Posterior vena cava (tissue), 2 donors: ENCODE measurements at regions of chr17 and their contacts with region 1.

Region 1: GRCh38 chr17:1573916-1574696 is 11.5 kb upstream of the PITPNA start:
- DNase-seq: peak; percentile 96

Region 2: DNA sequence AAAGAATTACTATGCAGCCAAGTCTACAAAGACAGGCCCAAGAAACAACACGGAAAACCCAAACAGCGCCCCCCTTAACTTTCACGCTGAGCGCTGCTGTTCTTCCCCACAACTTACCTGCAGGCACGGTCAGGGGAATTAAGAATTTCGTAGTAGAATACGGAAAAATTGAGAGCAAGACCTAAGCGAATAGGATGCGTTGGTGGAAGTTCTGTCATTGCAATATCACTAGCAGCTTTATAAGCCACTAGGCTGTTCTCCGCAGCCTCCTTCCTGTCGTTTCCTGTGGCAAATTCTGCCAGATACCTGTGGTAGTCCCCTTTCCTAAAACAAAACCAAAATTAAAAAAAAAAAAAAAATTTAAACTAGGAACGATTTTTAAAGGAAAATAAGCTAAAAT is 213.1 kb before region 1 on chr17:
- intact Hi-C with region 1: no loop called
- DNase-seq: no peak

Region 3: DNA sequence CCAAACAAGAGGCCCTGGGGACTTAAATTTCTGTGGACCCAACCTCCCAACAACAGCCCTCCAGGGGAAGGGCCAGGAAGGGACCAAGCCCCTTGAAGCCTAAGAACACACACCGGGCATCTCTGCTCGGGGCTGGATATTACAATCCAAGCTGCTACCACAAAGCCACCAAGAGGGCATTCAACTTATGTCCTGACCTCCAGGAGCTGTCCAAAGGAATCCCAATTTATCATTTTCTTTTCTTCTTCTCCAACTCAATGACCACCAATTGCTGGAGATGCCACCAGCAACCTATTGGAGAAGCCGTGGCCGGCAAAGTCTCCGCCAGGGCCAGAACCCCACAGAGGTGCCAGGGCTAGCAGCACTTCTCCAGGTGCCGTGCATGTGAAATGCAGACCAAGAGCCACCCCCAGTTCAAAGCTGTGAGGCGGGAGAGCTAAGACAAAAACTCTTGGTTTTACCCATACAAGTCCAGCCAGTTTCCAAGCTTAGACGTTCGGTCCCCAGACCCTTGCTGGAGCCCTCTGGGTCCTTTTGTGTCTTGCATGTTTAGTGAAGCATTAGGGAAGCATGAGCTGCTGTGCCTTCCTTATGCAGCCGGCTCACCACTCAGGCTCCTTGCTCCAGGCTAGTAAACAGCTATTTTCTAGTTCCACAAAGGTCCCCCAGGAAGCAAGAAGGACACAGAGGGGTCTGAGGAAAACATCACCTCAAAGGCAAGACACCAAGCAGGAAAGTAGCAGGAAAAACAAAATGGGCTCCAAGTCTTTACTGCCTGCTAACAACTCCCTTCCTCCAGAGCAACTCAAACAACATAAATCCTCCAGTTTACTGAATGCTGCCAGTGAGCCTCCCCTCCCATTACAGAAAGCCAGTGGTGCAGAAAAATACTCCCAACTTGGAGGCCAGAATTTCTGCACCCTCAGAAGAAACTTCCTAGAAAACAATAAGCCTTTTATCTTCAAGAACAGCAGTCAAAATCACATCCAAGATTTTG is 14.8 kb before region 1 on chr17:
- intact Hi-C with region 1: loop called in 1 of 2 experiments (anchors 1 kb)
- DNase-seq: no peak

Region 4: GRCh38 chr17:1590031-1590748 is 16.1 kb after region 1 on chr17:
- intact Hi-C with region 1: no loop called
- DNase-seq: peak; percentile 93

Region 5: DNA sequence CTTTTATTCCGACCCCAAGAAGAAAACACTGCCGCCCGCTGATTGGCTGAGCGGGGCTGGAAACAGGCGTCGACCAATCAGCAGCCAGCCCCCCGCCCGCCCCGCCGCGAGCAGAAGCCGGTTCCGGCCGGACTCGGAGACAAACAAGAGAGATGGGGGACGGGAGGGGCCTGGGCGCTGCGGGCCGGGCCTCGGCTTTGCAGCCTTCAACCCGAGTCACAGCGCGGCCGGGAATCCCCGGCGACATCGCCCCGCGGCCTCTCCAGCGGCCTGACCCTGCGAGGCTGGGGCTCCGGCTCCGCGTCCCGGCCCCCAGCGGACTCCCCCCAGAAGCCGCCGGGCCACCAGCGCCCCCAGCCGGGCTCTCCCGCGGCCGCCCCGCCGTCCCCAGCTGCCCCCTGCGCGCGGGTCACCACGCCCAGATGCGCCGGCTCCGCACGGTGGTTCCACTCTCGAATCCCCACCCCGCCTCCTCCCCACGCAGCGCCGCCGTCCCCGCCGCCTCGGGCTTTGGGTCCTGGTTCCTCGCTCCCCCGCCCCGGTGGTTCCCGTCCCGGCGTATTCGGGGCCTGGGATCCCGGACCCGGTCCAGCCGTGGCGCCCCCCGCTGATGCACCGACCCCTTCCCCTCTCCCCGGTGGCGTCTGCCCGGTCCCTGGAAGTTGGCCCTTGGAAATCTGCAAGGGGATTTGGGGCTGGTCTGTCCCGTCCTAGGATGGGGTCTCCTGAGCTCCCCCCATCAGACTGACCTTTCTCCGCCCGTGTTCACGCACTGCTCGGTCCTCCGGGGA is 54.9 kb after region 1 on chr17:
- intact Hi-C with region 1: loop called in 1 of 2 experiments (anchors 5 kb)
- DNase-seq: peak; percentile 98

Region 6: DNA sequence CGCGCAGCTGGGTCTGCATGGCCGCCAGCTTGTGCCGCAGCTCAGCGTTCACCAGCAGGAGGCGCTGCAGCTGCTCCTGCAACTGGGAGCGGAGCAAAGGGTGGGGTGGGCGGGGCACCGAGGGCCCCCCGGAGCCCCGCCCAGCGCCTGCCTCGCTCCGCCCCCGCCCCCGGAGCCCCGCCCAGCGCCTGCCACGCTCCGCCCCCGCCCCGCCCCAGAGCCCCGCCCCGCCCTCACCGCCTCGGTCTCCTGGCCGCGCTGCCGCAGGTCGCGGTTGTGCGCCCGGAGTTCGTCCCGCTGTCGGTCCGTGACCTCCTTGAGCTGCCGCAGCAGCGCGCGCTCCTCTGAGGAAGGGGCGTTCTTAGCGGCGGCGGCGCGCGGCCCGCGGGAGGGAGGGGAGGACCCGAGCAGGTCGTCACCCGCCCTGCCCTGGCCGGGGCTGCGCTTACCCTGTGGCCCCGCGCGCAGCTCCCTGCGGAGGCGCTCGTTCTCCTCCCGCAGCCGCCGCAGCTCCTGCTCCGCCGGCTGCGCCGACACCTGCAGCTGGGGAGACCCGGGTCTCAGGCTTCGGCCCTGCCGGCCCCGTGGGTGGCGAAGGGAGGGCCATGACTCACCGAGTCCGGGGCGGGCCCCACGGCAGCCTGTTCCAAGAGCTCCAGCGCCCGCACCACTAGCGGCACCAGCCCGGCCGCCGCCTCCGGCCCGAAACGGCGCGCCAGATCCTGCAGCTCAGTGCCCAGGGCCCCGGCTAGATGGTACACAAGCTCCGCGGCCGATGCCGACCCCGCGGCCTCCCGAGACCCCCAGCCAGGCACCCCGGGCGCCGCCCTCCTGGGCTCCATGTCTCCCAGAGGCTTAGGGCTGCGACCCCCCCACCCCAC is 75.1 kb after region 1 on chr17:
- intact Hi-C with region 1: loop called (anchors 5 kb)
- DNase-seq: peak; percentile 98

Region 7: DNA sequence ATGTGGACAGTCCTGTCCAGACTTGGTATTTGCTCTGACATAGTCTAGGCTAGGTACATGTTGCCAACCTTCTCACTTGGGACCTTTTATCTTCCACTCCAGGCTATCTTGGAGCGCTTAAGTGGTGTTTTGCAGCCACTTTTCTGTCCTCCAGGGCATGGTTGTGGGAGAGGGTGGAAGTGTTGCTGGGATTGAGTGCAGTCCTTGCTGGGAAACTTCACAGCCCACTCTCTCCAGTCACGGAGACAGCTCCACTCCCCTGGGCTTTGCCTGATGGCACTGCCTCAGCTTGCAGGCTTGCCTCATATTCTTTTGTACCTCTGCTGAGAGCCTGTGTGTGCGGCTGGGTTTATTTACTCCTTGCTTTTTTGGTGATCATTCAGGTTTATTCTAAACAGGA is 273.1 kb after region 1 on chr17:
- intact Hi-C with region 1: no loop called
- DNase-seq: no peak

Region 8: GRCh38 chr17:1865252-1866037 is 291.3 kb after region 1 on chr17:
- intact Hi-C with region 1: loop called in 1 of 2 experiments (anchors 10 kb)
- DNase-seq: no peak